AG04449 (cell line): ENCODE measurements at regions of chr9 and their contacts with region 1.

Region 1: DNA sequence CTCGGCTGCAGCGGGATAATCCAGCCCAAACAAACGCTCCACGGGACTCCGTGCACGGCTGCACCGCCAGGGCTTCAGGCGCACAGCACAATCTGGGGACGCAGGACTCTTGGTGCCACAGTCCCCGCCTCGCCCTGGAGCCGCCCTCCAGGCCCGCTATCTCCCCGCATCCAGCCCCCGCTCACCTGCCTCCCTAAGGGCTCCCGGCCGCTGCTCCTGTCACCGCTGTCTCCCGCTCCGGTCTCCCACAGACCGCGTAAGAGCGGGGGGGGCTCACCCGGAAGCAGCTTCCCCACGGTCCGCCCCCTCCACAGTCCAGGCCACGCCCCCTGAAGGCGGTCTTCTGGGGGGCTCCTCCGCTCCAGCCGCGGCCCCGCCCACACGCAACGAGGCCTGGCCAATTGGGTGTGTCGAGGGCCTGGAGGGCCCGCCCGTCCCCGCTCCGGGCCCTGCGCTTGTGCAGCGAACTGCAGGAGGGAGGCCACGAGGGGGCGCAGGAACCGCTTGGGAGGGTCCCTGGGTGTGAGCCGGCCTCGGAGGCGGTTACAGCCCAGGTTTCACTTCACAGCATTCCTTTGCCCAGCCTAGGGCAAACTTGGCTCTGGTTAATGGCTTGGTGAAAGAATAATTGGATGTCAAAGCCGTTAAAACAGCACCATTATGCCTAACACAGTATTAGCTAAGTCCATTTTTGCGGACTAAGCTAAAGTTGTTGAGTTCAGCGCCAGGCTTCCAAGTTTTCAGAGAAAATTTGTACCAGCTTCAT is at the start of gene ALAD:
- DNase-seq: peak; percentile 80
- H3K4me3 ChIP-seq: peak within 1 kb of the TSS; percentile 92
- CTCF ChIP-seq: peak; percentile 99

Region 2: DNA sequence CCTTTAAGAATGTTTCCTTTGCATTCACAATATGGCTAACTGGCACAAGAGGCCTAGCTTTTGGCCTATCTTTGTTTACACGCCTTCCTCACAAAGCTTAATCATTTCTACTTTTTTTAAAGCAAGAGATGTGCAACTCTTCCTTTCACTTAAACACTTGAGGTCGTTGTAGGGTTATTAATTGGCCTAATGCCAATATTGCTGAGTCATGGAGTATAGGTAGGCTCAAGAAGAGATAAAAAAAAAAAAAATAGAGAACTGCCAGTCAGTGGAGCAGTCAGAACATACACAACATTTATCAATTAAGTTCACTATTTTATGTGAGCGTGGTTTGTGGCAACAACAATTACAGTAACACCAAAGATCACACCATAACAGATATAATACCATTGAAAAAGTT is 186.1 kb before region 1 on chr9:
- CTCF ChIA-PET with region 1: no interaction called
- POLR2A ChIA-PET with region 1: no interaction called
- DNase-seq: no peak
- H3K4me3 ChIP-seq: no peak overlapping the region
- CTCF ChIP-seq: no peak

Region 3: DNA sequence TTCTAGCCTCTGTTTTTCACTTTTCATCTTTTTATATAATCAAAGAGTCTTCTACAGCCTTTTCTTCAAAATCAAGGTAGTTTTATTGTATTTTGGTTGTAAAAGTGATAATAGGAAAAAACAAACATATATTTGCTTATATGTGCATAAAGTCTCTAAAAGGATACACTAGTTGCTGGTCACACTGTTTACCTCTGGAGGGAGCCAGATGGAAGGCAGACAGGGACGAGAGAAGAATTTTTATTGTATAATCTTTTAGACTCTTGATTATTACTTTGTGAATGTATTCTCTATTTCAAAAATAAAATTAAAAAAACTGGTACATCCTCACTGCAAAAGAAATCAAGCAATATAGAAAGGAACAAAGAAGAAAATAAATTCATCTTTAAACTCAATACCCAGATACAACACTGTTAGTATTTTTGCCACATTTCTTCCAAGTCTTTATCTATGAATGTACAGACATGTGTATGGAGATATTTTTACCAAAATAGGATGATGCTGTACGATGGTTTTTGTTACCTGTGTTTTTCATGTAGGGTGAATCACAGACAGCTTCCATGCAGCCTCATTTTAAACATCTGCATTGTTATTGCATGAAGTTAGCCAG is 91.9 kb before region 1 on chr9:
- CTCF ChIA-PET with region 1: interaction called, 132 read pairs
- POLR2A ChIA-PET with region 1: no interaction called
- DNase-seq: no peak
- H3K4me3 ChIP-seq: no peak overlapping the region
- CTCF ChIP-seq: peak; percentile 55

Region 4: GRCh38 chr9:113340017-113340699 is 61.1 kb before region 1 on chr9 and contains the start of gene WDR31:
- CTCF ChIA-PET with region 1: interaction called, 26 read pairs
- POLR2A ChIA-PET with region 1: no interaction called
- DNase-seq: peak; percentile 29
- H3K4me3 ChIP-seq: peak within 1 kb of the TSS; percentile 93
- CTCF ChIP-seq: no peak

Region 5: GRCh38 chr9:113349445-113350094 is 51.6 kb before region 1 on chr9 and contains the start of gene BSPRY:
- CTCF ChIA-PET with region 1: interaction called, 18 read pairs
- POLR2A ChIA-PET with region 1: no interaction called
- DNase-seq: no peak
- H3K4me3 ChIP-seq: no peak within 1 kb of the TSS
- CTCF ChIP-seq: no peak

Region 6: GRCh38 chr9:113368982-113369869 is 32.0 kb before region 1 on chr9:
- CTCF ChIA-PET with region 1: interaction called, 11 read pairs
- POLR2A ChIA-PET with region 1: no interaction called
- DNase-seq: no peak
- H3K4me3 ChIP-seq: no peak overlapping the region
- CTCF ChIP-seq: no peak

Region 7: DNA sequence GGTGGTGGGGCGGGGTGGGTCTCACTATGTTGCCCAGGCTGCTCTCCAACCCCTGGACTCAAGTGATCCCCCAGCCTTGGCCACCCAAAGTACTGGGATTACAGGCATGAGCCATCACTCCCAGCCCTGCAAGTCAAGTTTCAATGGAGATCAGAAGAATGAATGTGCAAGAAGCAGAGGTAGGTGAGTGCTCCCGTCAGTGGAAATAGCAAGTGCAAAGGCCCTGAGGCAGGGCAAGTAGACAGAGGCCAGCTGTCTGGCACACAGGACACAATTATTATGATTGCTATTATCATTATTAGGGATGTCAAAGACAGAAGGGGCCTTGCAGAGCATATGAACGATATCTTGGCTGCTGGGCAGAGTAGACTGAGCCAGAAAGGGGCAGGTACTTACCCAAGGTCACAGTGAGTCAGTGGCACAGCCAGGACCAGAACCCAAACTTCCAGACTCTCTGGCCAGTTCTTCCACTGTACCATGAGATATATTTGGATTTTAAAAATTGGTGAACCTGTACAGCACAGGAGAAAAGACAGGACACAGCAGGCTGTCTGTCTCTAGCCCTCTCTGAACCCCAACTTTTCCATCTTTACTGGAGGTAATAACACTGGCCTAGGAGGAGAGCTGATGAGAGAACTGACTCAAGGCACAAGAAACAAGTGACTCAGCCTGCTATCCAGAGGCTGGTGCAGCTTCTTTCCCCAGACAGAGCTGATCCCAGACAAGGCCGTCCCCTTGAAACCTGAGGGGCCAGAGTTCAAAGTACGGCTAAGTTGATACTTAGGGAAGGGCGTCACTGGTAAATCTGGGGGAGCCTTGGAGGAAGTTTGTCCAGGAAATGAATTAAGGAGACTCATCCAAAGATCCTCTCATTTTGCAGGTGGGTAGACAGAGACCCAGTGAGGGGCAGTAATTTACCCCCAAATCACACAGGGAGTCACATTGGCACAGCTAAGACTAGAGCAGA is 25.9 kb before region 1 on chr9:
- CTCF ChIA-PET with region 1: interaction called, 11 read pairs
- POLR2A ChIA-PET with region 1: no interaction called
- DNase-seq: no peak
- H3K4me3 ChIP-seq: no peak overlapping the region
- CTCF ChIP-seq: no peak